ENCODE measurements at regions of chr11 and their contacts with region 1.

Region 1: GRCh38 chr11:117232092-117232878 is at the start of gene RNF214:
- DNase-seq: peak; percentile 79
- H3K4me3 ChIP-seq: peak within 1 kb of the TSS; percentile 82 to 97 (median 90)
- H3K27ac ChIP-seq: peak within 1 kb of the TSS; percentile 89
- H3K4me1 ChIP-seq: peaks cover 20% of the 10 kb centered on the region
- H3K27me3 ChIP-seq: no peaks in the 10 kb centered on the region
- CTCF ChIP-seq: peak; percentile 81 to 99
- POLR2A ChIP-seq: peak; percentile 49
- total RNA-seq, gene RNF214: 26.1 and 28.2 TPM in 2 replicates

Region 2: GRCh38 chr11:117083011-117083935 is 149.0 kb before region 1 on chr11:
- CTCF ChIA-PET with region 1: no interaction called
- POLR2A ChIA-PET with region 1: no interaction called
- dilution Hi-C with region 1: no loop called
- intact Hi-C with region 1: no loop called
- DNase-seq: no peak
- H3K4me3 ChIP-seq: no peak overlapping the region
- H3K27ac ChIP-seq: no peak overlapping the region
- H3K4me1 ChIP-seq: no peaks in the 10 kb centered on the region
- H3K27me3 ChIP-seq: no peaks in the 10 kb centered on the region
- CTCF ChIP-seq: no peak
- POLR2A ChIP-seq: no peak

Region 3: DNA sequence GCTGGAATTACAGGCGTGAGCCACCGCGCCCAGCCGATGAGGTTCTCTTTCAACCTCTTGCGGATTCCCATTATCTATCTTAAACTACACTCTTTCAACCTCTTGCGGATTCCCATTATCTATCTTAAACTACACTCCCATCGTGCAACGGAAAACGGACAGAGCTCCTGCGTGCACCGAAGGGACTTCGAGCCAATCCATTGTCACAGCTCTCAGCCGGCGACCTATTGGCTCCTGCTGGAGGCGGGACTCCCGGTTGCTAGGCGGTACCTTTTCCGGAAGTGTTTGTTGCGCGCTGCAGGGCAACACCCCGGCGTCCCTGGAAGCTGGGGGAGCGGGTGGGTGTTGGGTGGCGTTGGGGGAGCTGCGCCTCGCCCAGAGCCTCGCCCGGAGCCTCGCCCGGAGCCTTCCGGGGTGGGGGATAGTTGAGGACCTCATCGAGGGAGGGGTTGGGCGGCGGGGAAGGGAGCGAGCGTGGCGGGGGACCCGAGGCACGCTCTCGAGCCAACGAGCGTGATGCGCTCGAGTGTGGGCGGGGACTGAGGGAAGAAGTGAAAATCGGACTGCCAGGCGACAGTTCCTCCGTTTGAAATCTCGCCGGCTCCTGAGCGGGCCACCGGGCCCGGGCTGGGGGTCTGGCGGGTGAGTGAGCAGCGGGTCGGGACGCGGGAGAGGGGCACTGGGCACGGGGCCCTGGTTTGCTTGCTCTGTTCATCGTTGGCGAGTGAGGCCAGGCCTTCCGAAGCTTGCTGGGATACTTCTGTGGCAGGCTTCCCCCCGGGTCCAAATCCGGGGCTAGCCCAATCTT is 95.5 kb after region 1 on chr11 and contains the start of gene CEP164:
- CTCF ChIA-PET with region 1: no interaction called
- POLR2A ChIA-PET with region 1: no interaction called
- dilution Hi-C with region 1: no loop called
- intact Hi-C with region 1: loop called (anchors 1 kb)
- DNase-seq: peak; percentile 95
- H3K4me3 ChIP-seq: peak within 1 kb of the TSS; percentile 62 to 79 (median 78)
- H3K27ac ChIP-seq: peak within 1 kb of the TSS; percentile 48
- H3K4me1 ChIP-seq: peaks cover 9% of the 10 kb centered on the region
- H3K27me3 ChIP-seq: no peaks in the 10 kb centered on the region
- CTCF ChIP-seq: no peak
- POLR2A ChIP-seq: peak; percentile 85
- total RNA-seq, gene CEP164: 39.5 and 48.4 TPM in 2 replicates